Aorta (tissue), 5 donors: ENCODE measurements at regions of chr1 and their contacts with region 1.

Region 1: GRCh38 chr1:112955781-112956543 is at the start of gene SLC16A1:
- DNase-seq: peak; percentile 96 to 97
- ATAC-seq: peak; percentile 96
- H3K4me3 ChIP-seq: peak within 1 kb of the TSS; percentile 51 to 56
- H3K27ac ChIP-seq: peak within 1 kb of the TSS; percentile 20 to 71
- H3K4me1 ChIP-seq: no peaks in the 10 kb centered on the region
- H3K27me3 ChIP-seq: no peaks in the 10 kb centered on the region
- total RNA-seq, gene SLC16A1: 30.3 to 32.4 TPM

Region 2: GRCh38 chr1:112605633-112606327 is 350.2 kb before region 1 on chr1:
- intact Hi-C with region 1: no loop called
- DNase-seq: no peak
- ATAC-seq: no peak
- H3K4me3 ChIP-seq: no peak overlapping the region
- H3K27ac ChIP-seq: no peak overlapping the region
- H3K4me1 ChIP-seq: no peaks in the 10 kb centered on the region
- H3K27me3 ChIP-seq: no peaks in the 10 kb centered on the region

Region 3: DNA sequence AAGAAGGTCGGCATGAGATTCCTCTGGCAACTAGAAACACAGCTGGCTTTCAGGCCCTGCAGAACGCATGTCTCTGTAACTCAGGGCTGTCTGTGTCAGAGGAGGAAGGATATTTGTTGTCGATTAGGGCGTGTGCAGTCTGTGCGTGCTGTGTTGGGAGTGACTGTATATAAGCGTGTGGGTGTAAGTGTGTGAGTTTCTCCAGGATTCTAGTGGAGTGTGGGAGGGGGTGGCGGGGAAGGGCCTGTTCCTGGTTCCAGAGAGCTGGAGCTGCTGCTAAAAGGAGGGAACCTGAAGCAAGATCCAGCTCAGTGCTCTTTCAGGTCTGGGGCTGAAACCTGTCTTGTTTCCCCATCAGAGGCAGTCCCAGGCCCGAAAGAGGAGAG is 74.2 kb before region 1 on chr1:
- intact Hi-C with region 1: loop called in 1 of 2 experiments (anchors 2 kb)
- DNase-seq: no peak
- ATAC-seq: no peak
- H3K4me3 ChIP-seq: no peak overlapping the region
- H3K27ac ChIP-seq: no peak overlapping the region
- H3K4me1 ChIP-seq: no peaks in the 10 kb centered on the region
- H3K27me3 ChIP-seq: no peaks in the 10 kb centered on the region

Region 4: DNA sequence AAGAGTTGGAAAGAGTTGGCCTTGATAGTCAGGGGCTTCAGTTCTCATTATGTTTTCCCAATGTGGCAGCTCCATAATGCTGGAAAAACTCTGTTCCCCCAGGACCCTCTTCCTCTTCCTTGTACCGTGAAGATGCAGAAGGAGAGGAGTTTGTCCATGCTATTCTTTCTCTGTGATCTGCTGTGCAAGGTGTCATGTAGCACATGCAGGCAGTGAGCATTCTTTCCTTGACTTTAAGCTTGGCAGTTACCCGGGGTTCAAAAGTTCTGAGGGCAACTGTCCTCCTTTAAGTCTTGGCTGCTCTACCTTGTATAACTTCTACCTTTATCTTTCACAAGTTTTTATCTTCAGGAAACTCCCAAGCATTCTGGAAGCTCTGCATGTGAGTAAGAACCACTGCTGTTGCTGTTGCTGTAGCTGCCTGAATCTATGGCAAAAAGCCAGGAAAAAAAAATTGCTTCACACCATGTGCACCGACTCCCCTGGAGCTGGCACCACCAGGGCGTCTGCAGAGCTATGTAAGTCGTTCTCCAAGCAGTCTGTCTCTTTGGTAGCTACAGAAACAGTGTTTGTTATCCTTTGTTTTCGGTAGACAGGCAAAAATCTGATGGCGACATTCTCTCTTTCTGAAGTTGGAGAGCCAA is 42.8 kb after region 1 on chr1:
- intact Hi-C with region 1: loop called (anchors 2 to 5 kb)
- DNase-seq: peak; percentile 84 to 85
- ATAC-seq: peak; percentile 81
- H3K4me3 ChIP-seq: no peak overlapping the region
- H3K27ac ChIP-seq: peak overlapping the region; percentile 77 to 99
- H3K4me1 ChIP-seq: peaks cover 7% of the 10 kb centered on the region in 2 donors
- H3K27me3 ChIP-seq: no peaks in the 10 kb centered on the region